Heart left ventricle (tissue), 16 donors: ENCODE measurements at regions of chr7 and their contacts with region 1.

Region 1: DNA sequence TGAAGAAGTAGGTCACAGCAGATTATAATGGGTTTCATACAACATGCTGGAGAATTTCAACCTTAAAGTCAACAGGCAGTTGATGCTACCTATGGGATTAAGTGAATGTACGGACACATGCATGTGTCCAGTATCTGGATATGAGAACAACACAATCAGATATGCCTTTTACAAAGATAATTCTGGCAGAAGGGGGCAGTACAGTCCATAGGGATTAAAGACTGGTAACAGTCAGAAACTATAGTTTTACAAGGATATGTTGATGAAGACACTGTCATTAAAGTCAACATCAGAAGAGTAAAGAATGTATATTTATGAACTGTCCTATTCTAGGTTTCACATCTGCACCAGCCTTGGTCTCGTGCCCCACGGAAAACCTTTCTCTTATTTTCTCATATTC is 41.5 kb downstream of the ANKMY2 start:
- DNase-seq: no peak
- ATAC-seq: no peak
- H3K4me3 ChIP-seq: no peak overlapping the region
- H3K27ac ChIP-seq: no peak overlapping the region
- H3K4me1 ChIP-seq: no peaks in the 10 kb centered on the region
- H3K27me3 ChIP-seq: no peaks in the 10 kb centered on the region
- CTCF ChIP-seq: peak in 5 of 12 donors; percentile 10 to 21 (median 15)
- POLR2A ChIP-seq: no peak

Region 2: GRCh38 chr7:16688249-16688648 is 84.2 kb after region 1 on chr7:
- intact Hi-C with region 1: loop called in 1 of 10 experiments (anchors 5 kb)
- DNase-seq: no peak
- ATAC-seq: peak in 2 of 4 donors; percentile 16 to 20
- H3K4me3 ChIP-seq: no peak overlapping the region
- H3K27ac ChIP-seq: no peak overlapping the region
- H3K4me1 ChIP-seq: no peaks in the 10 kb centered on the region
- H3K27me3 ChIP-seq: no peaks in the 10 kb centered on the region
- CTCF ChIP-seq: no peak
- POLR2A ChIP-seq: no peak